Breast epithelium (tissue), 4 donors: ENCODE measurements at regions of chr11 and their contacts with region 1.

Region 1: GRCh38 chr11:3709977-3710376 is 38.8 kb upstream of the CHRNA10 start:
- DNase-seq: peak in 1 of 2 donors; percentile 41
- H3K4me3 ChIP-seq: no peak overlapping the region
- H3K27ac ChIP-seq: peak overlapping the region in 1 of 2 donors; percentile 42
- H3K4me1 ChIP-seq: peaks cover 0 to 12% of the 10 kb centered on the region in 2 donors
- H3K27me3 ChIP-seq: no peaks in the 10 kb centered on the region
- CTCF ChIP-seq: peak in 1 of 3 donors; percentile 27
- POLR2A ChIP-seq: no peak

Region 2: DNA sequence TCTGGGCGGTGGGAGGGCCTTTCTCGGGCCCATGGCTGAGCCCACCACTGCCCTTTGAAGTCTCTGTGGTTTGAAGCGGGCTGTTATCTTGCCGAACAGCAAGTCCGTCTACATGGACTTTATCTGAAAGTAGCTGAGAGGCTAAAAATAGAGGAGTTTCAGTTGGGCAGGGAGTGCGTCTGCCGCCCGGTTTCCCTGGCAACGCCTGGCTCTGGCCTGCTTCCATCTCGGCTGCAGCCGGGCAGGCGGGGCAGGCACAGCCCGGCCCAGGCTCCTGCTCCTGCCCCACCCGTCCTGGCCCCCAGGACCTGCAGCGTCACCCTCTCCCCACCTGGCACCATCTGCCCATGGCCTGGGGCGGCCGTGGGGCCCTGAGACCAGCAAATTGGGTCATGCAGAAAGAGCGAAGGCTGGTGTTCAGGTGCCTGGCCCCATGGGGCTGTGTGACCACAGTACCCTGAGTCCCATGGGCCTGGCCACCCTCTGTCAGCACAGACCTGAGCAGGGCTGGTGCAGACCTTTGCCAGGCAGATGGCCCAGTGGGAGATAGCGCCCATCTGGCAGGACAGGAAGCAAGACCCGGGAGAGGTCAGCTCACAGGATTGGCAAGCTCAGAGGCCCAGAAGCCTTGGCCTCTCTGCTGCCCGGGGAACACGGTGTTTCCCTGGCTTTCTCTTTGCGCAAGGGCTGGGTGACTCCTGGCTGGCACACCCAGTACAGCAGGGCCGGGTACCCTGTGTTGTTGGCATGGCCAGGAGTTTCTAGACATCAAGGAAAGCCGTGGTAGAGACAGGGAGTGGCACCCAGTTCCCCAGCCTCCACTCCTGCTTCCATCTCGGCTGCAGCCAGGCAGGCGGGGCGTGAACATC is 931.1 kb before region 1 on chr11:
- intact Hi-C with region 1: loop called (anchors 10 kb)
- DNase-seq: peak; percentile 67 to 81
- H3K4me3 ChIP-seq: peak overlapping the region in 2 of 3 donors; percentile 15 to 32
- H3K27ac ChIP-seq: peak overlapping the region; percentile 76 to 77
- H3K4me1 ChIP-seq: peaks cover 0 to 5% of the 10 kb centered on the region in 2 donors
- H3K27me3 ChIP-seq: no peaks in the 10 kb centered on the region
- CTCF ChIP-seq: peak in 1 of 3 donors; percentile 57
- POLR2A ChIP-seq: no peak

Region 3: DNA sequence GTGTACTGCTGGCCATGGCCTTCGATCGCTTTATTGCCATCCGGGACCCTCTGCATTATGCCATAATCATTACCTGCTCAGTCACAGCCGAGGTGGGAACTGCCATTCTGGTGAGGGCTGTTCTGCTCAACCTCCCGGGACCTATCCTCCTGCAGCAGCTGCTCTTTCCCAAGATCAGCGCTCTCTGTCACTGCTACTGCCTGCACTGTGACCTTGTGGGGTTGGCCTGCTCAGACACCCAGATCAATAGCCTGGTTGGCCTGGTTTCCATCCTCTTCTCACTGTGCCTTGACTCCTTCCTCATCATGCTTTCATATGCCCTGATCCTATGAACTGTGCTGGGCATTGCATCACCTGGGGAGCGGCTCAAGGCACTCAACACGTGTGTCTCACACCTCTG is 708.4 kb after region 1 on chr11:
- intact Hi-C with region 1: no loop called
- DNase-seq: no peak
- H3K4me3 ChIP-seq: no peak overlapping the region
- H3K27ac ChIP-seq: no peak overlapping the region
- H3K4me1 ChIP-seq: no peaks in the 10 kb centered on the region
- H3K27me3 ChIP-seq: no peaks in the 10 kb centered on the region
- CTCF ChIP-seq: no peak
- POLR2A ChIP-seq: no peak